Endothelial cell of umbilical vein (primary cell): ENCODE measurements at regions of chr9 and their contacts with region 1.

Region 1: DNA sequence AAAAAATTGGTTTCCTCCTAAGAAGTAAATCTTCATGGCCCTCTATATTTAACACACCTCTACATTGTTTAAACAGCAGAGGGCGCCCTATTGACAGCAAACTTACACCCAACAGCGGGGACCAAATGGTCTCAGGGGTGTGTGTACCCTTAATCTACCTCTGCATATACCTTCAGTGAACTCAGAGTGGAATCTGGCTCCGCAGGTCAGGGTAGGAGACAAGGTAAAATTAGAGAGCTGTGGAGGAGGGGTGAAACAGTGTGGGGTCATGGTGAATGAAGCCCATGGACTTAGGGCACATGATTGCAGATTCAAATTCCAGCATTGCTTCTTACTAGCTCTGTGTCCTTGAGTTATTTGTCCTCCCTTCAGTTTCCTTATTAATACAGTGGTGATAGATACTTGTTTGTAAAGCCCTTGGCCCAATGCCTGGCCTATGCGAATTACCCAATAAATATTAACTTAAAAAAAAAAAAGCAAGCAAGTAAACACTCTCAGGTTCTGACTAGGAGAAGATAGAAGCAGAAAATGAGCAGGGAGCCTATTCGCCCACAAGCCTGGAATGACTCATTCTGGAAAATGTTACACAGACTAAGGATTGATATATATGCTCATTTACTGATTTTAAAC is 122.9 kb downstream of the CAVIN4 start:
- DNase-seq: peak; percentile 38
- H3K4me3 ChIP-seq: no peak overlapping the region
- H3K27ac ChIP-seq: no peak overlapping the region
- H3K4me1 ChIP-seq: no peaks in the 10 kb centered on the region
- H3K27me3 ChIP-seq: no peaks in the 10 kb centered on the region
- CTCF ChIP-seq: peak; percentile 42 to 54
- POLR2A ChIP-seq: no peak

Region 2: DNA sequence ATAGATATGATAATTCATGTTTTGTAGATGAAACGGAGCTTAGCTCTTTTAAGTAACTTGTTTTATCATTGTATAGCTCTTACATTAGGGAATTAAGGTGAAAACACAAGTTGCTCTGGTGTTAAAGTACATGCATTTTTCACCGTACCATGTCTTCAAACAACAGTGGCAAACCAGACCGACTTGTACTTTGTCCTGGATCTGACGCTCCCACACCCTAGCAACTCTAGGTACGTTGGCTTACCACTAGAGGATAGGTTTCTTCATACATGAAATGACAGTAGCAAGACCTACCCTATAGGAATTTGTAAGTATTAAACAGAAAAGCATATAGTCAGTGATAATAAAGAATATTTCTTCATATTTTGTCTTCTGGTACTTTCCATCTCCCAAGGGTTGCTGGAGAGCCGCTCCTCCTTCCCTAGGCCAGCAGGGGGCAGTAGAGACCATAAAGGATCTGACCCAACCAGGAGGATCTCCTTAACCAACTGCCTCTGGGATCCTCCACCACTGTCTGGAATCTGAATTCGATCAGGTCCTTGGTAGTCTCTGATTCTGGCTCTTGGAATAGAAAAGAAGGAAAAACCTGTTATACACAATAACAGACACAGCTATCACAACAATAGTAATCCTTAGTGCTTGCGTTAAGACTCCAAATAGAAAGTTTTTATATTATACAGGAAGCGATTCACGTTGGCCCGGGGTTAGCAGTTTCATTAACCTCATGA is 13.7 kb after region 1 on chr9:
- CTCF ChIA-PET with region 1: interaction called, 18 read pairs
- POLR2A ChIA-PET with region 1: no interaction called
- dilution Hi-C with region 1: no loop called
- intact Hi-C with region 1: no loop called
- DNase-seq: peak; percentile 57
- H3K4me3 ChIP-seq: no peak overlapping the region
- H3K27ac ChIP-seq: no peak overlapping the region
- H3K4me1 ChIP-seq: no peaks in the 10 kb centered on the region
- H3K27me3 ChIP-seq: no peaks in the 10 kb centered on the region
- CTCF ChIP-seq: peak; percentile 80 to 81
- POLR2A ChIP-seq: no peak